Sigmoid colon (tissue), 7 donors: ENCODE measurements at regions of chr4 and their contacts with region 1.

Region 1: DNA sequence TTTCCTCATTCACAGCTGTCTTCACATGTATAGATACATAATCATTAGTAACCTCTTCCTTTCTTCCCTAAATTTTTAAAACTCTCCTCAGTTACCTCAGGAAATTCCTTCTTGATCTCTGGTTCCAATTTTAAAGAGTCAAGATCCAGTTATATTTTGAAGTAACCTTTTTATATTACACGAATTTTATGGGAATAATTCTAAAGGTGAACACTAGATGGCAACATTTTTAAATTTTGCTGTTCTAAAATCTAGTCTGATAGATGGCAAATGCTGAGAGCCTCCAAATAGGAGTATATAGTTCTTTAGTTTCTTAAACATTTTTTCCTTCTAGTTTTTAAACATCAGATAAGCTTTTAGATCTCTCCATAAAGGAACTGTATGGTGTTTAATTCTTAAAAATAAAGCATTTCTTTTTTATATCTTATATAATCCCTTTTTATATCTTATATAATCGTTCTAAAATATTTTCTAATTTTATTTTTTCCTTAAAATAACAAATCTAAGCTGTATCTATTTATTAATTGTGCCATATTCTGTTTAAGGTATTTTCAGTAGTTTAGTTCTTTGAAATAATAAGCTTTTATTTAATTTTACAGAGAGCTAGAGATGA is 37.9 kb upstream of the PAPSS1 start:
- DNase-seq: no peak
- H3K4me3 ChIP-seq: no peak overlapping the region
- H3K27ac ChIP-seq: no peak overlapping the region
- H3K4me1 ChIP-seq: peaks cover 0 to 4% (median 0%) of the 10 kb centered on the region in 4 donors
- H3K27me3 ChIP-seq: no peaks in the 10 kb centered on the region
- CTCF ChIP-seq: peak; percentile 28 to 54 (median 42)
- EP300 ChIP-seq: no peak
- POLR2A ChIP-seq: no peak

Region 2: DNA sequence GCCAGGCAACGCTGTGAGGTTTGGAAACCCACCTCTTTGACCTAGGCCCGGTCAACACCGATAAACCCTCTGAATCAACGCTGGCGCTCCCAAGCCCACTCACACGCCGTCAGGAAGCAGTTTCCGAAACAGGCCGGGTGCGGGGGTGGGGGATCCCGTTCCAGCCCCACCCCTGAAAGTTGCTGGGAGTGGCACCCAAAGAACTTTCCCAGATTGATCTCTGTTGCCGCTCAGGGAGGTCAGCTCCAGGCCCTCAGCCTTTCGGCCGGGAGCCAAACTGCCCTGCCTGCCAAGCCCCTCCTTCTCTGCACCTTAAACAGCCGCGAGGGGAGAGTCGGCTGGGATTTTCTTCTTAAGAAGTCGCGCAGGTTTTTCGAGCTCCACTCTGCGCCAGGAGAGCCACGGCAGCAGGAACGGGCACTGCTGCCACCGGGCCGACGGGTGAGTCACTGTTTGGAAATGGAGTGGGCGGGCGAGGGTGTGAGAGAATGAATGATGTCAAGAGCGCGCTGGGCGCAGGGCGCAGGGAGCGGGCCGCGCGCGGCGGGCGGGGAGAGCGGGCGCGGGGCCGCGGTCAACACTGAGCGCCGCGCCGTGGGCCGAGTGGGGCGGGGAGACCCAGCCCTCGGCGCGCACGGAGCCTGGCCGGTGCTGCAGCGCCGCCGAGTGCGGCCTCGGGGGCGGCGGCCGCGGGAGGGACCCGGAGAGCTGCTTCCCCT is 66.5 kb after region 1 on chr4 and contains the start of gene SGMS2:
- intact Hi-C with region 1: loop called (anchors 5 kb)
- DNase-seq: peak; percentile 95
- H3K4me3 ChIP-seq: peak within 1 kb of the TSS; percentile 80 to 92 (median 89)
- H3K27ac ChIP-seq: peak within 1 kb of the TSS; percentile 93 to 97 (median 96)
- H3K4me1 ChIP-seq: peaks cover 0 to 40% (median 32%) of the 10 kb centered on the region in 4 donors
- H3K27me3 ChIP-seq: no peaks in the 10 kb centered on the region
- CTCF ChIP-seq: no peak
- EP300 ChIP-seq: peak in 1 of 4 donors; percentile 3
- POLR2A ChIP-seq: peak; percentile 50 to 70
- total RNA-seq, gene SGMS2: 101 to 204 (median 147) TPM

Region 3: DNA sequence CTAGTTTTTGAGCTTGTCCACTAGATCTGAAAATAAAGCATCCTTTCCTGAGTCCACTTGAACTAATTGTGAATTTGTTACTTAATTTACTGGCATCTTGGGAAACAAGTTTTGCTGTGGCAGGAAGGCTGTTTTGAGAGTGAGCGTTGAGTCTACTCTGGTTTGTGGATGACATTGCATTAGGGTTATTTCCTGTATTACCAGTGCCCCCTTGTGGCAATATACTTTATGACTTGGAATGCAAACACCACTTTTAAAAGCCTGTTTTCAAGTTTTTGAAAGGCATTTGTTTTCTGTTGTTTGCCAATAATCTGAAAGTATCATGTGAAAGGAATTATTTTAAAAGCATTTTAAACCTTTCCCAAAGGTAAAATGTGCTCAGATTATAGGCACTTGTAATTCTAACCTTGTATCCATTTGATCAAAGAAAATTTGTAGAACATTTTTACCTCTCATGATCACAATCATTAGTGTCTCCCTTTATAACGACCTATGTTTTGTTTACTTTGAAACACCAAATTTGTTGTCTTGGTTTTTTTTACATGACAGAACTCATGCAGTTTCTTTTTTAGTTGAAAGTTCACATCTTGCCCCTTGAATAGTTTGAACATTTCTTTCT is 155.4 kb after region 1 on chr4:
- intact Hi-C with region 1: loop called (anchors 1 kb)
- DNase-seq: no peak
- H3K4me3 ChIP-seq: no peak overlapping the region
- H3K27ac ChIP-seq: no peak overlapping the region
- H3K4me1 ChIP-seq: no peaks in the 10 kb centered on the region
- H3K27me3 ChIP-seq: no peaks in the 10 kb centered on the region
- CTCF ChIP-seq: peak; percentile 74 to 82 (median 78)
- EP300 ChIP-seq: no peak
- POLR2A ChIP-seq: no peak